B cell (primary cell): ENCODE measurements at regions of chr6 and their contacts with region 1.

Region 1: GRCh38 chr6:110971468-110971867 is 10.4 kb upstream of the RPF2 start:
- DNase-seq: no peak
- ATAC-seq: no peak
- H3K4me3 ChIP-seq: no peak overlapping the region
- H3K4me3 Mint-ChIP-seq: no peak overlapping the region
- H3K27ac ChIP-seq: no peak overlapping the region
- H3K27ac Mint-ChIP-seq: no peak overlapping the region
- H3K4me1 ChIP-seq: no peaks in the 10 kb centered on the region
- H3K4me1 Mint-ChIP-seq: no peaks in the 10 kb centered on the region
- H3K27me3 ChIP-seq: no peaks in the 10 kb centered on the region
- H3K27me3 Mint-ChIP-seq: no peaks in the 10 kb centered on the region
- CTCF ChIP-seq: no peak

Region 2: DNA sequence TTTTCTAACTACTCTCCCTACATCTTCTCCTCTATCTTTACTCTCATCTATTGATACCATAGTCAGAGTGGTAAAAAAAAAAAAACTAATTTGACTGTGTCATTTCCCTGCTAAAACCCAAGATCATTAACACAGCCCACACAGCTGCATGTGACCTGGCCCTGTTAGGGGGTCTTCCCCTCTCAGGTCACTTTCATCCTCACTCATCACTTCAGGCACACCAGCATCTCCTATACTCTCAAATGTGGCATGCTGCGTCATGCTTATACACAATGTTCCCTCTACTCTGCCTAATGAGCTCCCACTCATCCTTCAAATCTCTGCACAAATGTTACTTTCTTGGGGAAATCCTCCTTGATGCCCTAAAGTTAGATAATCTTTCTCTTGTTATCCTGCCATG is 243.0 kb before region 1 on chr6:
- CTCF ChIA-PET with region 1: no interaction called
- POLR2A ChIA-PET with region 1: interaction called, 19 read pairs
- intact Hi-C with region 1: no loop called
- DNase-seq: no peak
- ATAC-seq: no peak
- H3K4me3 ChIP-seq: no peak overlapping the region
- H3K4me3 Mint-ChIP-seq: no peak overlapping the region
- H3K27ac ChIP-seq: no peak overlapping the region
- H3K27ac Mint-ChIP-seq: no peak overlapping the region
- H3K4me1 ChIP-seq: peaks cover 0 to 3% of the 10 kb centered on the region in 2 donors
- H3K4me1 Mint-ChIP-seq: peaks cover 1% of the 10 kb centered on the region
- H3K27me3 ChIP-seq: no peaks in the 10 kb centered on the region
- H3K27me3 Mint-ChIP-seq: no peaks in the 10 kb centered on the region
- CTCF ChIP-seq: no peak

Region 3: DNA sequence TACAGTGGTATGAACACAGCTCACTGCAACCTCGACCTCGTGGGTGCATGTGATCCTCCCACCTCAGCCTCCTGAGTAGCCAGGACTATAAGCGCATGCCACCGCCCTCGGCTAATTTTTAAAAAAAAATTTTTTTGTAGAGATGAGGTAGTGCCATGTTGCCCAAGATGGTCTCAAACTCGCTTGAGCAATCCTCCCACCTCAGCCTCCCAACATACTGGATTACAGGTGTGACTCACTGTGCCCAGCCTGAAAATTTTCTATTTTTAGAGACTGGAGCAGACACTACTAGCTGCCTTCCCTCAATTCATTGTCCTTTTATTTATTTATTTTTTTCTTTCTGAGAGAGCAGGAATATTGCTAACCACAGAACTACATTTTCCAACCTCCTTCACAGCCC is 33.3 kb before region 1 on chr6:
- CTCF ChIA-PET with region 1: no interaction called
- POLR2A ChIA-PET with region 1: no interaction called
- intact Hi-C with region 1: no loop called
- DNase-seq: no peak
- ATAC-seq: no peak
- H3K4me3 ChIP-seq: no peak overlapping the region
- H3K4me3 Mint-ChIP-seq: no peak overlapping the region
- H3K27ac ChIP-seq: no peak overlapping the region
- H3K27ac Mint-ChIP-seq: no peak overlapping the region
- H3K4me1 ChIP-seq: peaks cover 6 to 9% of the 10 kb centered on the region in 2 donors
- H3K4me1 Mint-ChIP-seq: peaks cover 9% of the 10 kb centered on the region
- H3K27me3 ChIP-seq: no peaks in the 10 kb centered on the region
- H3K27me3 Mint-ChIP-seq: no peaks in the 10 kb centered on the region
- CTCF ChIP-seq: no peak

Region 4: DNA sequence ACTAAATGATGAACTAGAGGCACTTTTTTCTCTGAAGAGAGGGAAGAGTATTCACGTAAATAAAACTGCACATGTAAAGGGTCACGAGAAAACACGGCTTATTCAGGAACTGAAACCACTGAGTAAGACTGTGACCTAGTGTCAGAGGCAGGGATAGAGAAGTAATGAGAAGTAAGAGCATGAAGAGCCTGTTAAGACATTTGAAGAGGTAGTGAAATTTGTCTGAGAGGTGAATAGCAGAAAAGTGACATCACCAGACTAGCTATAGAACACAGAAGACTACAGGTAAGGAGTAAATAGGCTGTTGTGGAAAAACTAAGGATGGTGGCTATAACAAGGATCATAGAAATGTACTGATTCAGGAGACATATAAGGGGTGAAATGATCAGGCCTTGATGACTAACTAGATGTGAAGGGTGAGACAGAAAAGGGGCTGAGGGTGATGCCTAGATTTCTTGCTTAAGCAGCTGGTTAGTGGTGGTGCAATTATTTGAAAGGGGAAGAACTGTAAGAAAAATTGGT is 434.8 kb after region 1 on chr6:
- CTCF ChIA-PET with region 1: no interaction called
- POLR2A ChIA-PET with region 1: no interaction called
- intact Hi-C with region 1: no loop called
- DNase-seq: peak; percentile 93
- ATAC-seq: peak; percentile 97
- H3K4me3 ChIP-seq: no peak overlapping the region
- H3K4me3 Mint-ChIP-seq: peak overlapping the region; percentile 64
- H3K27ac ChIP-seq: peak overlapping the region; percentile 73 to 94
- H3K27ac Mint-ChIP-seq: peak overlapping the region; percentile 85
- H3K4me1 ChIP-seq: peaks cover 15 to 17% of the 10 kb centered on the region in 2 donors
- H3K4me1 Mint-ChIP-seq: peaks cover 27% of the 10 kb centered on the region
- H3K27me3 ChIP-seq: no peaks in the 10 kb centered on the region
- H3K27me3 Mint-ChIP-seq: no peaks in the 10 kb centered on the region
- CTCF ChIP-seq: no peak